HAP-1 (cell line): ENCODE measurements at regions of chr1 and their contacts with region 1.

Region 1: DNA sequence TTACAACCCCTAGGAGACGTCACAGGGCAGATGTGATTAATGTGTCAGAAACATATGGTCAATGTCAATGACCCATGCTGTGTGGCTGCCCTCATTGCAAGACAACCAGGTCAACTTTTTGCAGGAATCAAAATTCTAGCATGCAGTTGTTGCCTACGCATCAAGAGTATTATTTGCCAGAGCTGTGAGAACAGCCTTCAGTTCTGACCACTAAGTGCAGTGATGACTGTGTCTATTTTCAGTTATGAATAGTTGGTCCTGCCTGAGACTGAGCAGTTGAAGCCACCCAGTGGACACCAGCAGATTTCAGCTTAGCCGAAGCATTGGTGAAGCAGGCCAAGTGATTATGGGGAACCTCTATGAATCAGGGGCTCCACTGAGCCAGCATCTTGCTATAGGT is 47.3 kb downstream of the LYPLAL1 start:
- DNase-seq: no peak
- H3K4me3 ChIP-seq: no peak overlapping the region
- H3K4me1 ChIP-seq: no peaks in the 10 kb centered on the region
- H3K27me3 ChIP-seq: no peaks in the 10 kb centered on the region

Region 2: GRCh38 chr1:218991089-218991488 is 229.9 kb before region 1 on chr1:
- in situ Hi-C with region 1: no loop called
- DNase-seq: no peak
- H3K4me3 ChIP-seq: no peak overlapping the region
- H3K4me1 ChIP-seq: no peaks in the 10 kb centered on the region
- H3K27me3 ChIP-seq: no peaks in the 10 kb centered on the region

Region 3: DNA sequence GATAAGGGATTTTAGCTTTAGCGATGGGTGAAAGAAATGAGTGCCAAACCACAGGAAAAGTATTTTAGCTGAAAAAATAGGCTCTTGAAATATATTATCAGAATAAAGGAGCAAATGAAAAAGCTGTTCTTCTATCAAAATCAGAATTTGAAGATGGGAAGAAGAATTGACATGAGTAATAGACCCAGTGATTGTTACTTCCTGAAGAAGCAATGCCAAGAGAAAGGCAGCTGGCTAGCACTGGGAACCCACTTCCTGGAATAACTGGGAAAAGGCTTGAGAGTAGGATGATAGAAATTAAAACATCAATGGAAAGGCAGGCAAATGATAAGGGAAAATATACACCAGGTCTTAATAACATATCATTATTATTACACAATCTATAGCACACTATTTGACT is 77.2 kb before region 1 on chr1:
- in situ Hi-C with region 1: no loop called
- DNase-seq: no peak
- H3K4me3 ChIP-seq: no peak overlapping the region
- H3K4me1 ChIP-seq: no peaks in the 10 kb centered on the region
- H3K27me3 ChIP-seq: no peaks in the 10 kb centered on the region

Region 4: GRCh38 chr1:219385786-219386427 is 165.0 kb after region 1 on chr1:
- in situ Hi-C with region 1: loop called (anchors 25 kb)
- DNase-seq: peak; percentile 68 to 80
- H3K4me3 ChIP-seq: no peak overlapping the region
- H3K4me1 ChIP-seq: peaks cover 13% of the 10 kb centered on the region; the same call in 1 of the 2 replicates
- H3K27me3 ChIP-seq: no peaks in the 10 kb centered on the region

Region 5: DNA sequence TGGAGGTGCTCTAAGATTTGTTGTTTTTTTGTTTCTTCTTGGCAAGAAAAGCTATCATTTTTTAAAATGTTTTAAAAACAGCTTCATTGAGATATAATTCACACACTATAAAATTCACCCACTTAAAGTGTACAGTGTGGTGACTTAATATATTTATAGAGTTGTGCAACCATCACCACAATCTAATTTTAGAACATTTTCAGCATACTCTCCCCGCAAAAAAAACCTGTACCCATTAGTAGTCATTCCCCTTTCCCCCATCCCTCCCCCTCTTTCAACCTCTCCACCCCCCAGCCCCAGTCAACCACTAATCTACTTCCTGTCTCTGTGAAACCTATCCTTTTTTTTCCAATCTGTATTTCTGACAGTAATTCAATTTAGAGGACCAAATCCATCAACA is 361.4 kb after region 1 on chr1:
- in situ Hi-C with region 1: no loop called
- DNase-seq: no peak
- H3K4me3 ChIP-seq: no peak overlapping the region
- H3K4me1 ChIP-seq: no peaks in the 10 kb centered on the region
- H3K27me3 ChIP-seq: no peaks in the 10 kb centered on the region; the same call in 1 of the 2 replicates